ENCODE measurements at regions of chr17 and their contacts with region 1.

Region 1: DNA sequence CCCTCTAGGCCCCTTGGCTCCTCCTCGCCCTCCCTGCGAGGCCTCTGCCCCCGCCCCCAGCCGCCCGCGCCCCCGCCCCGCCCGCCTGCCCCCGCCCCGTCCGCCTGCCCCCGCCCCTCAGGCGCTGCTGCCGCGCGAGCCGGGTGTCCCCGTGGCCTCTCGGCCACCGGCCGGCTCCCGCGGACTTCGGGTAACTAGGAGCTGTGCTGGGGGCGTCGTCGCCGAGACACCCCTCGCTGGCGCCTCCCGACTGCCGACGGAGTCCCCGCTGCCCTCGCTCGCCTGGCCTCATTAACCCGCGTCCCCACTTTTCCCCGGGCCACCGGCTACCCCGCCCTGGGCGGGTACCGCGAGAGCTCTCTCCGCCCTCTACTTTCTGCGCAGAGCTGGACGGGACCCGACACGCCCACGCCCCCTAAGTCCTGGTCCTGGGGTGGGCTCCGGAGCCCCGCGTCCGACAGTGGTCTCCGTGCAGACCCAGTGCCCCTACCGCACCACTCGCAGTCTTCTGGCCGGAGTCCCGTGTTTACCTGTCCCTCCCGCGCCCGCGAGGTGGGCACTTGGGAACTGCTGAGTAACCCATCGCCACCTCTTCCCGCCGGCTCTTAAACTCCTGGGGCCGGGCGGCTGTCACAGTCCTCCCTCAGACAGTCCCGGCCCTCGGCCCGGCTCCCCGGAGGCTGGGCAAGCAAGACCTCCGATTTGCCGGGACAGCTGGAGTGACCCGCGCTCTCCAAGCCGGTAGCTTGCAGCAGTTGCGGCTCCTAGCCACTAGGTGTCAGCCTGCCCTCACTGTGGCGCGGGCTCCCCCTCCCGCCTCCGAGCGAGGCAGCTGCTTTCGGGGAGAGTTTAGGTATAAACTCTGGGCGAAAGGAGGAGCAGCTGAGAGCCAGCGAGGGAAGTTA is at the start of gene TLCD1:
- DNase-seq: peak; percentile 95 to 96
- H3K4me3 ChIP-seq: peak within 1 kb of the TSS; percentile 65 to 91
- H3K27ac ChIP-seq: peak within 1 kb of the TSS; percentile 90 to 99
- H3K4me1 ChIP-seq: peaks cover 4 to 48% (median 28%) of the 10 kb centered on the region in 4 donors
- H3K27me3 ChIP-seq: no peaks in the 10 kb centered on the region
- CTCF ChIP-seq: peak; percentile 99 to 100

Region 2: GRCh38 chr17:28743225-28744103 is 17.0 kb after region 1 on chr17 and contains the start of gene TRAF4:
- intact Hi-C with region 1: loop called (anchors 1 kb)
- DNase-seq: peak; percentile 77 to 88
- H3K4me3 ChIP-seq: peak within 1 kb of the TSS; percentile 63 to 73
- H3K27ac ChIP-seq: peak within 1 kb of the TSS; percentile 81 to 83
- H3K4me1 ChIP-seq: peaks cover 0 to 65% (median 44%) of the 10 kb centered on the region in 4 donors
- H3K27me3 ChIP-seq: no peaks in the 10 kb centered on the region
- CTCF ChIP-seq: peak in 1 of 2 experiments; percentile 41

Region 3: DNA sequence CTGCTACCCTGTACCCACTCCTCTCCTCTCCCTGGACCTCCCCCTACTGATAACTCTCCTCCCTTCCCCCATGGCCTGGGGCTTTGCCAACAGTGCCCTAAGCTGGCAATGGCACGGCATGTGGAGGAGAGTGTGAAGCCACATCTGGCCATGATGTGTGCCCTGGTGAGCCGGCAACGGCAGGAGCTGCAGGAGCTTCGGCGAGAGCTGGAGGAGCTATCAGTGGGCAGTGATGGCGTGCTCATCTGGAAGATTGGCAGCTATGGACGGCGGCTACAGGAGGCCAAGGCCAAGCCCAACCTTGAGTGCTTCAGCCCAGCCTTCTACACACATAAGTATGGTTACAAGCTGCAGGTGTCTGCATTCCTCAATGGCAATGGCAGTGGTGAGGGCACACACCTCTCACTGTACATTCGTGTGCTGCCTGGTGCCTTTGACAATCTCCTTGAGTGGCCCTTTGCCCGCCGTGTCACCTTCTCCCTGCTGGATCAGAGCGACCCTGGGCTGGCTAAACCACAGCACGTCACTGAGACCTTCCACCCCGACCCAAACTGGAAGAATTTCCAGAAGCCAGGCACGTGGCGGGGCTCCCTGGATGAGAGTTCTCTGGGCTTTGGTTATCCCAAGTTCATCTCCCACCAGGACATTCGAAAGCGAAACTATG is 22.5 kb after region 1 on chr17:
- intact Hi-C with region 1: loop called (anchors 1 kb)
- DNase-seq: no peak
- H3K4me3 ChIP-seq: no peak overlapping the region
- H3K27ac ChIP-seq: peak overlapping the region in 1 of 2 donors; percentile 14
- H3K4me1 ChIP-seq: peaks cover 0 to 62% (median 38%) of the 10 kb centered on the region in 4 donors
- H3K27me3 ChIP-seq: no peaks in the 10 kb centered on the region
- CTCF ChIP-seq: no peak

Region 4: GRCh38 chr17:28842282-28843012 is 116.0 kb after region 1 on chr17 and contains the start of gene FAM222B:
- intact Hi-C with region 1: no loop called
- DNase-seq: peak; percentile 69 to 86
- H3K4me3 ChIP-seq: peak within 1 kb of the TSS; percentile 84
- H3K27ac ChIP-seq: peak within 1 kb of the TSS; percentile 84
- H3K4me1 ChIP-seq: peaks cover 0 to 18% (median 10%) of the 10 kb centered on the region in 4 donors
- H3K27me3 ChIP-seq: no peaks in the 10 kb centered on the region
- CTCF ChIP-seq: no peak

Region 5: DNA sequence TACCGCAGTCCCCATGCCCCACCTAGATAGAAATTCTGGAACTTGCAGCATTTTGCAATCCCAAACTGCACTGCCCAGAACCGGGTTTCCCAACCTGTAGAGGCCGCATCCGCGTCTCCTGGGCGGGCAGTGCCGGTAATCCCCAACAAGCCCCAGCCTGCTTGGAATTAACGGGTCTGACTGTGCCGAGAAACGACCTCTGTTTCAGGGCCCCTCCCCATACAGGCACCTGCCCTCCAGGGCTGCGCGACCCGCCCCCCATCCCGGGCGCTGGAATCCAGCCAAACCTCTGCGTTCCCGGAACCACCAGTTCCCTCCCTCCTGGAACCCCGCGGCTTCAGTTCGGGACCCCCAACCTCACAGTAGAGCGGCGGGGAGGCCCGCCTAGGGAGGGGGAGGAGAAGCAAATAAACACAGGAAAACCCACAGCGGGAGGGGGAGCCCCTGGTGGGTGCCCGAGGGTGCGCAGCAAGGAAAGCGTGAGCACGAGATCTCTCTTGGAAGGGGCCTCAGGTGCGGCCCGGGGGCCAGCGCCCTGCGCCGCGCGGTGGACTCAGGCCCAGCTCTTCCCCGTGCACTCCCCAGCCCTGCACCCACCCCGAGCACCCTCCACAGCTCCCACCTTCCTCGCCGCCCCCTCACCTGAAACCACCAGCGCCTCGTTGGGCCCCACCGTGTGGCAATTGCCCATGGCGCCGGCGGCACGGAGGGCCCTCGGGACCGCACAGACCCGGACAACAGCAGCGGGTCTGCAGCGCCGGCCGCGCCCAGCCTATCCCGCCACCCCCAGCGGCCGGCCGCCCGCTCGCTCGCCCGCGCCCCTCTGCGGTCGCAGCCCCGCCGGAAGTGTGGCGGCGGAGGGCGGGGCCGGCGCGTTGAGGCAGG is 170.6 kb after region 1 on chr17 and contains the start of gene FLOT2:
- intact Hi-C with region 1: loop called (anchors 5 kb)
- DNase-seq: peak; percentile 78 to 86
- H3K4me3 ChIP-seq: peak within 1 kb of the TSS; percentile 81 to 86
- H3K27ac ChIP-seq: peak within 1 kb of the TSS; percentile 92 to 94
- H3K4me1 ChIP-seq: peaks cover 0 to 62% (median 44%) of the 10 kb centered on the region in 4 donors
- H3K27me3 ChIP-seq: no peaks in the 10 kb centered on the region
- CTCF ChIP-seq: peak in 1 of 2 experiments; percentile 19